CD4-positive, alpha-beta memory T cell (primary cell): ENCODE measurements at regions of chr10 and their contacts with region 1.

Region 1: GRCh38 chr10:96374985-96375830 is 16.4 kb upstream of the OPALIN start:
- DNase-seq: peak; percentile 52 to 55 (median 54)
- H3K4me3 ChIP-seq: peak overlapping the region; percentile 22 to 44
- H3K4me3 Mint-ChIP-seq: peak overlapping the region; percentile 63 to 88 (median 83)
- H3K27ac ChIP-seq: no peak overlapping the region
- H3K27ac Mint-ChIP-seq: no peak overlapping the region
- H3K4me1 ChIP-seq: peaks cover 11% of the 10 kb centered on the region
- H3K4me1 Mint-ChIP-seq: peaks cover 6 to 16% (median 10%) of the 10 kb centered on the region in 4 donors
- H3K27me3 ChIP-seq: no peaks in the 10 kb centered on the region
- H3K27me3 Mint-ChIP-seq: peaks cover 1 to 5% of the 10 kb centered on the region in 2 donors

Region 2: GRCh38 chr10:96107623-96108038 is 267.6 kb before region 1 on chr10:
- CTCF ChIA-PET with region 1: no interaction called
- POLR2A ChIA-PET with region 1: no interaction called
- intact Hi-C with region 1: no loop called
- DNase-seq: no peak
- H3K4me3 ChIP-seq: no peak overlapping the region
- H3K4me3 Mint-ChIP-seq: no peak overlapping the region
- H3K27ac ChIP-seq: no peak overlapping the region
- H3K27ac Mint-ChIP-seq: no peak overlapping the region
- H3K4me1 ChIP-seq: no peaks in the 10 kb centered on the region
- H3K4me1 Mint-ChIP-seq: no peaks in the 10 kb centered on the region
- H3K27me3 ChIP-seq: peaks cover 23% of the 10 kb centered on the region
- H3K27me3 Mint-ChIP-seq: peaks cover 55 to 67% of the 10 kb centered on the region in 2 donors

Region 3: DNA sequence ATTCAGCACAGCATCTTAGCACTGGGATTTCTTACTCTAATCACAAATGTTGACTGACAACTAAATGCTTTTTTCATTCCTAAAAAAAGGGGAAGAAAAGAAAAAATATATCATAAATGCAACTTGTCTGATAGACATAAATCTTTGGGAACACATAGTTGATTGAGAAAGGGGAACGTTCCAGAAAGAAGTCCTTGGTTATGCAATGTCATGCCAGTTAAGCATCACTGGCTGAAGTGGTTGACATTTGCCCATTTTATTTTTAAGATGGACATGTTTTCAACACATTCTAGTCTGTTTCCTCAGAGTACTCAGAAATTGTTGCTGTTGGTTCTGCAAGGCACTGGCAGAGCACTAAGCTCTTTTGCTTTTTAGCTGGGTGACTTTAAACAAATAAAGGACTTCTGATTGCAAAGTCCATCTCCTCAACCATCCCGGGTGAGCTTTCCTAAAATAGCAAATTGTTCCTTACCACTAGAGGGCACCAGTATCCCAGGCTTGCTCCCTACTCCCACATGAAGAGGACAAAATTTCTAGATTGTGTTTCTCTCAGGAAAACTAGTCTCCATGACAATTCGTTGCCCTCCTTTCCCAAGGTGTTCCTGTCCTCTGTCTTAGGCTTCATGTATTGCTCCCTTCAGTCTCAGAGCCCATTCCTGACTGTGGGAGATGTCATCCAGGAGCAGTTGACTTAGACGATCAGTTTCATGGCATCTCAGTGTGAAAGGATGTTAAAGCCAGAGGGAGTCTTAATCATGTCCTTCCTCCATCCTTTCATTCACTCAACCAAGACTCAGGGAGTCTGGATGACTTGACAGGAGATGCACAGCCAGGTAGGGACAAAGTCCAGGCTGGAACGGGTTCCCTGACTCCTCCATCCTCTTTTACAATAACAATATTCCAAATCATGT is 40.3 kb before region 1 on chr10:
- CTCF ChIA-PET with region 1: interaction called, 11 read pairs
- POLR2A ChIA-PET with region 1: no interaction called
- intact Hi-C with region 1: no loop called
- DNase-seq: peak in 1 of 5 donors; percentile 16
- H3K4me3 ChIP-seq: no peak overlapping the region
- H3K4me3 Mint-ChIP-seq: no peak overlapping the region
- H3K27ac ChIP-seq: no peak overlapping the region
- H3K27ac Mint-ChIP-seq: no peak overlapping the region
- H3K4me1 ChIP-seq: peaks cover 14% of the 10 kb centered on the region
- H3K4me1 Mint-ChIP-seq: peaks cover 13 to 18% (median 13%) of the 10 kb centered on the region in 4 donors
- H3K27me3 ChIP-seq: peaks cover 9% of the 10 kb centered on the region
- H3K27me3 Mint-ChIP-seq: peaks cover 8 to 35% of the 10 kb centered on the region in 2 donors

Region 4: GRCh38 chr10:96358851-96359540 is 16.2 kb before region 1 on chr10 and contains the start of gene OPALIN:
- CTCF ChIA-PET with region 1: interaction called, 26 read pairs
- POLR2A ChIA-PET with region 1: no interaction called
- intact Hi-C with region 1: no loop called
- DNase-seq: no peak
- H3K4me3 ChIP-seq: no peak within 1 kb of the TSS
- H3K4me3 Mint-ChIP-seq: no peak within 1 kb of the TSS
- H3K27ac ChIP-seq: no peak within 1 kb of the TSS
- H3K27ac Mint-ChIP-seq: peak within 1 kb of the TSS in 2 of 7 donors; percentile 28 to 59
- H3K4me1 ChIP-seq: no peaks in the 10 kb centered on the region
- H3K4me1 Mint-ChIP-seq: no peaks in the 10 kb centered on the region
- H3K27me3 ChIP-seq: no peaks in the 10 kb centered on the region
- H3K27me3 Mint-ChIP-seq: peaks cover 10 to 24% of the 10 kb centered on the region in 2 donors
- total RNA-seq, gene OPALIN: not detected

Region 5: DNA sequence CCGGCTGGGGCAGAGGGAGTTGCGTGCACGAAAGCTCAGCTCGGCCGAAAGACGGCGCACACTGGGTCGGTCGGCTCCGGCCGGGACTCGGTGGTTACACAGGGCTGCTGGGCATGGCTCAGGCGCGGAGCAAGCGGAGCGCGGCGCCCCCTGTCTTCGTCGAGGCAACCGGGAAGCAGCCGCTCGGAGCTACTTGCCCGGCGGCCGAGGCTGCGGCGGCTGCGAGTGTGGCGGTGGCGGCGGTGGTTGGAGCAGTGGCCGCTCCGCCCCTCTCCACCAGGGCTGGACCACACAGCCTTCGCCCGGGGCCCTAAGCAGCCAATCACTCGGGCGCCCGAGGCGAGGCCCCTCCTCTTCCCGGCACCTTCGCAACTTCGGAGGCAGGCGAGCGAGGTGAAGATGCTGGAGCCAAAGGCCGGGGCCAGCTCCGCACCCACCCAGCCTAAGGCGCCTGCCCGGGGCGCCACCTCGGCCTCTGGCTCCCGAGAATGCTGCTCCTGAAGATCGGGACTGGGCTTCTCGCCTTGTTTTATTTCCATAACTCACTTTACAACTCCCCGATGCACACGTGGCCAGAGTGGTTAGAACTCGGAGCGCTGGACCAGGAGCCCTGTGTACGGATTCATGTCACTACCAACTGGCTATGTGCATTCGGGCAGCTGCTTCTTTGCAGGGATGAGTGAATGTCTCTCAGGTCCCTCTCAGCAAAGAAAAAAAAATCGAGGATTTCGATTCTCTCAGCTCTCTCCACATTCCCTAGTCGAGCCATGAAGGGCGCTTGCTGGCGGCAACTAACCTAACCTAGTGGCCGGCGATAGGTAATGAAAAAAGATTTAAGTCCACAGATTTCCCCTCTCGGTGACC is 138.7 kb after region 1 on chr10 and contains the start of gene TLL2:
- CTCF ChIA-PET with region 1: no interaction called
- POLR2A ChIA-PET with region 1: no interaction called
- intact Hi-C with region 1: loop called (anchors 5 kb)
- DNase-seq: peak; percentile 26 to 54 (median 39)
- H3K4me3 ChIP-seq: peak within 1 kb of the TSS; percentile 15 to 55
- H3K4me3 Mint-ChIP-seq: peak within 1 kb of the TSS; percentile 81 to 86 (median 84)
- H3K27ac ChIP-seq: no peak within 1 kb of the TSS
- H3K27ac Mint-ChIP-seq: peak within 1 kb of the TSS in 2 of 7 donors; percentile 56 to 67
- H3K4me1 ChIP-seq: peaks cover 23% of the 10 kb centered on the region
- H3K4me1 Mint-ChIP-seq: peaks cover 10 to 23% (median 16%) of the 10 kb centered on the region in 4 donors
- H3K27me3 ChIP-seq: peaks cover 10% of the 10 kb centered on the region
- H3K27me3 Mint-ChIP-seq: peaks cover 4 to 6% of the 10 kb centered on the region in 2 donors
- total RNA-seq, gene TLL2: 0.17 TPM in 1 of 2 experiments, not detected in the other